Right lobe of liver (tissue), 6 donors: ENCODE measurements at regions of chr11 and their contacts with region 1.

Region 1: DNA sequence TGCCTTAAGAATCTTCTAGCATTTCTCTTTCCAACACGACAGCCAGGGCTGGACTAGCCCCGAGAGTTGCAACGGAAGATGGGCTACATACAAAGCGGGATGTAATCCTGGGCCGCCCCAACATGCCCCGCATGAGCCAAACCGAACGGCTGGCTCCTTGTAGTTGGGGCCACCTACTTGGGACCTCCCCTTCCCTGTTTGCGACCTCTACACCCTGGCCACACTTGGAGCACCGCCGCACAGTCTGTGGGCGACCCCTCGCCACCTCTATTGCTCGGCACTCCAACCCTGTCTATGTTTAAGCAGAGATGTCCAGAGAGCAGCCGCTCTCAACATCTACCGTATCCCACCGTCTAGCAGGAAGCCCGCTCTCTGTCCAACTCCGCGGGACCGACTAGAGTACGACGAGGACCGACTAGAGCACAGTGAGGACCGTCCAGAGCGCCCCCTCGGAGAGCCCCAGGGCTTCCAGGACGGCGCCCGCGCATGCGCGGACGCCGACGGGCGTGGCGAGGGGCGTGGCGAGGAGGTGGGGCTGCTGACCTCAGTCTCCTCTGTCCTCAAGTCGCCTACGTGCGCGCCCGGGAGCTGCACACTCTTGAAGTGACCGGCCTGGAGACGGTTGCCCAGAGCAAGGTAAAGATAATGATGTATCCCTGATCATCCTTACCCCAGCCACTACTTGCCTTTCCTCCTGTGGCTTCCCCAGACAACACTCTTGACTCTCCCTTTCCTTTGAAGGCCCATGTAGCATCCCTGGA is 32.3 kb downstream of the NEAT1 start:
- DNase-seq: peak; percentile 88 to 92 (median 92)
- ATAC-seq: peak; percentile 90 to 97 (median 96)
- H3K4me3 ChIP-seq: peak overlapping the region; percentile 35 to 52 (median 40)
- H3K27ac ChIP-seq: peak overlapping the region; percentile 56 to 73 (median 58)
- H3K4me1 ChIP-seq: peaks cover 0 to 8% (median 0%) of the 10 kb centered on the region in 4 donors
- H3K27me3 ChIP-seq: no peaks in the 10 kb centered on the region
- CTCF ChIP-seq: peak in 1 of 4 donors; percentile 4
- POLR2A ChIP-seq: peak; percentile 70

Region 2: DNA sequence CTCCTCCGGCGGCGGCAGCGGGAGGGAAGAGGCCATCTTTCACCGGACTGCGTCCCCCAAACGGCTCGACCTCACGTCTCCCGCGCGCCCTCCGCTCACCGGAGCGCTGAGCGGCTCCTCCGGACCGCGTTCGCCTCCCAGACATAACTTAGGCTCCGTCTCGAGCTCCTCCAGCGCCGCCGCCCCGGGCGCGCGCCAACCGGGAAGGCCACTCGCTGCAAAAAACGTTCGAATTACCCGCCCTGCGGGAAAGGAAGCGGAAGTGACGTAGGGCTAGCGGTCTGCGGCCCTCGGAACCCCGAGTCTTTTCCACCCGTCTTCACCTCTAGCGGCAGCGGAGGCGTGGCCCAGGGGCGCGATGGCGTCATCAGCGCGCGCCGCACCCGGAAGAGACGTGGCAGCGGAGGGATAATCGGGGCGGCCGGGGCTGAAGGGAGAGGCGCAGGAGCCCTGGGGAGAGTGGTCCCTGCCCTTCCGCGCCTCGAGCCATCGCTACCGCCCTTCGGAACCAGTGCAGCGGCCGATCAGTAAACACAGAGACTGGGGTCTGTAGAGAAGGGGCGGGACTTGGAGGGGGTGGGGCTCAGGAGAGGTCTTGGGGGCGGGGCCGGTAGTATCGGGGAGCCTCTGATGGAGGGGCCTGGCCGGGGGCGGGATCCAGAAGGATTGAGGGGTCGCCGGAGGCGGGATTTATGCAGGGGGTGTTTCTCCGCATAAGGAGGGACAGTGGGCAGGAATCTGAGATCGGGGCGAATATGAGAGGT is 370.9 kb before region 1 on chr11 and contains the starts of genes CDCA5 and ZFPL1:
- intact Hi-C with region 1: no loop called
- DNase-seq: peak; percentile 92 to 96 (median 96)
- ATAC-seq: peak; percentile 89 to 97 (median 96)
- H3K4me3 ChIP-seq: peak within 1 kb of the TSS; percentile 69 to 80 (median 73)
- H3K27ac ChIP-seq: peak within 1 kb of the TSS; percentile 59 to 91 (median 83)
- H3K4me1 ChIP-seq: peaks cover 0 to 16% (median 4%) of the 10 kb centered on the region in 4 donors
- H3K27me3 ChIP-seq: no peaks in the 10 kb centered on the region
- CTCF ChIP-seq: no peak
- POLR2A ChIP-seq: no peak
- total RNA-seq, gene CDCA5: 0.31 to 2.3 (median 1.0) TPM
- total RNA-seq, gene ZFPL1: 15.4 to 22.4 (median 18.0) TPM

Region 3: GRCh38 chr11:65497141-65498041 is 42.5 kb after region 1 on chr11:
- intact Hi-C with region 1: no loop called
- DNase-seq: peak; percentile 99
- ATAC-seq: peak; percentile 65 to 90 (median 82)
- H3K4me3 ChIP-seq: peak overlapping the region; percentile 61 to 75 (median 67)
- H3K27ac ChIP-seq: peak overlapping the region; percentile 99 to 100 (median 100)
- H3K4me1 ChIP-seq: peaks cover 0 to 45% (median 21%) of the 10 kb centered on the region in 4 donors
- H3K27me3 ChIP-seq: no peaks in the 10 kb centered on the region
- CTCF ChIP-seq: peak in 1 of 4 donors; percentile 10
- POLR2A ChIP-seq: peak; percentile 85

Region 4: GRCh38 chr11:65516135-65516935 is 61.5 kb after region 1 on chr11:
- intact Hi-C with region 1: loop called in 1 of 2 experiments (anchors 10 kb)
- DNase-seq: peak in 1 of 3 donors; percentile 32
- ATAC-seq: peak in 1 of 4 donors; percentile 36
- H3K4me3 ChIP-seq: no peak overlapping the region
- H3K27ac ChIP-seq: no peak overlapping the region
- H3K4me1 ChIP-seq: no peaks in the 10 kb centered on the region
- H3K27me3 ChIP-seq: no peaks in the 10 kb centered on the region
- CTCF ChIP-seq: no peak
- POLR2A ChIP-seq: no peak

Region 5: DNA sequence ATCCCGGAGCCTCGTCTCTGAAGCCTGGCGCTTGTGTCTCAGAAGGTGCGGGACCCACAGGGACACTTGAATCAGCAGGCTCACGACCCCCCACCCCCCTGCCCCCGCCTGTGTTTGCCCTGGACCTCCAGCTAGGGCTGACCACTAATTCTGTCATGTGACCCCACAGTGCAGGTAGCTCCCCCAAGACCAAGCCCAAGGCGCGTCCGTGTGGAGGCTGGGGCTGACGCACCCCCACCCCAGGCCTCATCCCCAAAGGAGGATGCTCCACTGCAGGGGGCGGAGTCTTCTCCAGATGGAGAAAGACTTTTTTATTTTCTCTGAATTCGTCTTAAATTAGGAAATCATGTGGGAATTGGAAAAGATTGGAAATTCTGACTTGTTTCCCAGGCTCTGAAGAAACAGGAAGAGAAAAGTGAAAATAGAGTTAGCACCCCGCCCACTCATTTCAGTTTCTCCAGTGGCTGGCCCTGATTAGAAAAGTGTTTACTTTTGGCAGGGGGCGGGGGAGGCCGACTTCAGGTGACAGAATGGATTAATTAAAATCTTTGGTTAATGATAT is 208.8 kb after region 1 on chr11:
- intact Hi-C with region 1: no loop called
- DNase-seq: peak in 2 of 3 donors; percentile 57 to 61
- ATAC-seq: peak; percentile 33 to 42 (median 40)
- H3K4me3 ChIP-seq: peak overlapping the region; percentile 67 to 95 (median 88)
- H3K27ac ChIP-seq: peak overlapping the region; percentile 92 to 100 (median 95)
- H3K4me1 ChIP-seq: peaks cover 0 to 25% (median 7%) of the 10 kb centered on the region in 4 donors
- H3K27me3 ChIP-seq: no peaks in the 10 kb centered on the region
- CTCF ChIP-seq: no peak
- POLR2A ChIP-seq: no peak